Activated CD4-positive, alpha-beta T cell treated with anti-CD3 and anti-CD28 coated beads, Interleukin-2, amount 10 ng/mL, durations not matched to agents 24 days and 14 days (primary cell): ENCODE measurements at regions of chr19 and their contacts with region 1.

Region 1: GRCh38 chr19:13207846-13208671 is 57.8 kb downstream of the IER2 start:
- DNase-seq: peak; percentile 87
- H3K4me3 Mint-ChIP-seq: peak overlapping the region; percentile 81
- H3K27ac Mint-ChIP-seq: peak overlapping the region; percentile 94
- H3K4me1 Mint-ChIP-seq: peaks cover 13% of the 10 kb centered on the region
- H3K27me3 Mint-ChIP-seq: no peaks in the 10 kb centered on the region

Region 2: GRCh38 chr19:13162518-13163314 is 45.3 kb before region 1 on chr19:
- intact Hi-C with region 1: loop called (anchors 1 kb)
- DNase-seq: peak; percentile 98
- H3K4me3 Mint-ChIP-seq: peak overlapping the region; percentile 89
- H3K27ac Mint-ChIP-seq: peak overlapping the region; percentile 95
- H3K4me1 Mint-ChIP-seq: peaks cover 57% of the 10 kb centered on the region
- H3K27me3 Mint-ChIP-seq: no peaks in the 10 kb centered on the region

Region 3: GRCh38 chr19:13262450-13262849 is 54.4 kb after region 1 on chr19:
- intact Hi-C with region 1: loop called (anchors 2 kb)
- DNase-seq: peak; percentile 74
- H3K4me3 Mint-ChIP-seq: no peak overlapping the region
- H3K27ac Mint-ChIP-seq: no peak overlapping the region
- H3K4me1 Mint-ChIP-seq: peaks cover 17% of the 10 kb centered on the region
- H3K27me3 Mint-ChIP-seq: peaks cover 22% of the 10 kb centered on the region